ENCODE measurements at regions of chr9 and their contacts with region 1.

Region 1: GRCh38 chr9:21334701-21335632 is at the start of gene KLHL9:
- DNase-seq: peak; percentile 52
- H3K4me3 ChIP-seq: peak within 1 kb of the TSS; percentile 81
- CTCF ChIP-seq: no peak

Region 2: GRCh38 chr9:21317956-21318923 is 16.7 kb before region 1 on chr9:
- CTCF ChIA-PET with region 1: interaction called, 36 read pairs
- POLR2A ChIA-PET with region 1: interaction called, 7 read pairs
- DNase-seq: no peak
- H3K4me3 ChIP-seq: no peak overlapping the region
- CTCF ChIP-seq: peak; percentile 71

Measured in AG04449 (cell line).